IMR-90 (cell line): ENCODE measurements at regions of chrX and their contacts with region 1.

Region 1: DNA sequence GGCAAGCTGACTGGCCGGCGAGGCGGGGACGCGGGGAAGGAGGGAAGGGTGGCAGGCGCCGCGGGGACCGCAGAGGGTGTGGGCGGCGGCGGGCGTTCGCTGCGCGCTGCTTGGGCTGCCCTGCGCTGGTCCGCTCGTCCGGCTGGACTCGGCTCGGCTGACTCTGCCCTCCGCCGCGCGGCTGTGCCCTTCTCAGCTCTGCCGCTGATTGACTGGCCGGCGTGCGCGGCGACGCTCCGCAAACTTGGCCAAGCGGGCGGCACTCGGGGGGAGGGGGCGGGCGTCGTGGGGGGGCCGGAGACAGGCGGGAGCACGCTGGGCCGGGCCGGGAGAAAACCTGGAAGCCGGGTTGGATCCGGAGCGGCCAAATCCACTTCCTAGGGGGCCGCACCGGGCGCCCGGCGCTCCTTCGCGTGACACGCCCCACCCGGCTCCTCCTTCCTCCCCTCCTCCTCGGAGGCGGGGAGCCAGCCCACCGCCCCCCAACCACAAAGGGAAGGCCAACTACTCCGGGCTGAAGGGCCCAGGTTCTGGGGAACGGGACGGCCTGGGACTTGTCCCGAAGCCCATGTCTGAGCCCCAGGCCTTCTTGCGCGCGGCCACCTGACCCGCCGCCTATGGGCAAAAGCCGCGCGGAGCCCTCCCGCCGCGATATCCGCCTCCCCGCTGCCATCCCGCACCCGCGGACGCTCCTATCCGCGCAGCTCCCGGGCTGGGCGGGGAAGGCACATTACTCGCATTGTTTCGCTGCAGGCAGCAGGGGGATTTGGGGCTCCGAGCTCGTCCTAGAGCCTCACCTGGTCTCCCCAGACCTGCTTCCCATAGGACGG is at the start of gene GPC4:
- DNase-seq: no peak
- ATAC-seq: peak; percentile 70
- H3K4me3 ChIP-seq: peak within 1 kb of the TSS; percentile 96
- H3K27ac ChIP-seq: peak within 1 kb of the TSS; percentile 59
- H3K4me1 ChIP-seq: no peaks in the 10 kb centered on the region; the same call in 1 of the 2 replicates
- H3K27me3 ChIP-seq: peaks cover 18% of the 10 kb centered on the region
- CTCF ChIP-seq: no peak
- POLR2A ChIP-seq: no peak
- RAD21 ChIP-seq: no peak
- total RNA-seq, gene GPC4: 0.54 and 0.56 TPM in 2 replicates

Region 2: DNA sequence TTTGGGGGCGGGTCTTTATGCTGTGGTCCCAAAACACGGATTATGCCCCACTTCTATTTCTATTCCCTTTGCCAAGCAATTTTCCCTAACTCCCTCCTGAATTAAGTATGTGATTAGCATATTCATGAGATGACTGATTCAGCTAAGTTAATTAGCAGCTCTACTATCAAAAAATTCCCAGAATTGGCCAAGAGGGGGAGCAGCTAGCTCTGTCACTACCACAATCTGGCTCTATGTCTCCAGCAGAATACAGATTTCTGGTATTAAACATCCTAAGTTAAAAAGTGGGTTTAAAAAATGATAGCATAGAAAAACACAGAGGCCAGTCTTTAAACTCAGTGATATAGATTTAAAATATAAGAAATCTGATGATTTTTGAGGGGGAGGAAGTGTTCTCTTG is 80.5 kb before region 1 on chrX:
- CTCF ChIA-PET with region 1: no interaction called
- POLR2A ChIA-PET with region 1: no interaction called
- dilution Hi-C with region 1: no loop called
- in situ Hi-C with region 1: no loop called
- intact Hi-C with region 1: loop called (anchors 1 kb)
- DNase-seq: peak; percentile 26
- ATAC-seq: no peak
- H3K4me3 ChIP-seq: no peak overlapping the region
- H3K27ac ChIP-seq: no peak overlapping the region
- H3K4me1 ChIP-seq: no peaks in the 10 kb centered on the region
- H3K27me3 ChIP-seq: peaks cover 2% of the 10 kb centered on the region
- CTCF ChIP-seq: peak; percentile 55
- POLR2A ChIP-seq: no peak
- RAD21 ChIP-seq: peak; percentile 48

Region 3: GRCh38 chrX:133660281-133660680 is 244.8 kb after region 1 on chrX:
- CTCF ChIA-PET with region 1: no interaction called
- POLR2A ChIA-PET with region 1: no interaction called
- dilution Hi-C with region 1: no loop called
- in situ Hi-C with region 1: no loop called
- intact Hi-C with region 1: loop called (anchors 10 kb)
- DNase-seq: peak; percentile 48
- ATAC-seq: no peak
- H3K4me3 ChIP-seq: no peak overlapping the region
- H3K27ac ChIP-seq: no peak overlapping the region
- H3K4me1 ChIP-seq: no peaks in the 10 kb centered on the region
- H3K27me3 ChIP-seq: no peaks in the 10 kb centered on the region
- CTCF ChIP-seq: no peak
- POLR2A ChIP-seq: no peak
- RAD21 ChIP-seq: no peak